ENCODE measurements at regions of chr3 and their contacts with region 1.

Region 1: DNA sequence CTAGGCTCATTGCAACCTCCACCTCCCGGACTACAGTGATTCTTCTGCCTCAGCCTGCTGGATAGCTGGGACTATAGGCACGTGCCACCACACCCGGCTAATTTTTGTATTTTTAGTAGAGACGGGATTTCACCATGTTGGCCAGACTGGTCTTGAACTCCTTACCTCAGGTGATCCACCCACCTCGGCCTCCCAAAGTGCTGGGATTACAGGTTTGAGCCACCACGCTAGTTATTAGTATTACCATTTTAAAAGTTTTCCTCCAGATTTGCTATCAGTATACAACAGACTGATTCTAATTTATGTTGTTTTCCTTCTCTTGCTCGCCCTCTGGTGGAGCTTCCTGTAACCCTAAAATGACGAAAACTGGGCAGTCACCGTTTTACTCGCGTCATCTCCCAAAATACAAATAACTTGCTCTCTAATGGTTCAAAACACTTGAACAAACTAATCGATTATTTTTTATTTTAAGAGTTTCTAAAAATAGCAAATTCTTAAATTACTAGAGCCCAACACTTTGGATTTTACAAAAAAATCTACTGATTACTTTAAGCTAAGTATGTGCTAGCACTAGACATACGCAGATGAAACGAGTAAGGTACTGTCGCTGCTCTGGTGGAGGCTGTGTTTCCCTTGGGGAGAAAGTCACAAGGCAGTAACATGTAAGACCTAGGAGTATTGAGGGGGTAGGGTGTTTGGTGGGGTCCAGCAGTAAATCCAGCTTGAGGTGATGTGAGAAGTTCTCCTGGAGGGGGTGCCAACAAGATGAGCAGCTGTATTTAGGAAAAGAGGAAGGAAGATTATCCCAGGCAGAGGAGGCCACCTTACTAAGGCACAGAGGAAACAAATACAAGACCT is 203.3 kb downstream of the MBNL1 start:
- DNase-seq: peak; percentile 70
- H3K4me3 ChIP-seq: no peak overlapping the region
- H3K27ac ChIP-seq: no peak overlapping the region
- H3K4me1 ChIP-seq: no peaks in the 10 kb centered on the region
- CTCF ChIP-seq: peak; percentile 90

Region 2: DNA sequence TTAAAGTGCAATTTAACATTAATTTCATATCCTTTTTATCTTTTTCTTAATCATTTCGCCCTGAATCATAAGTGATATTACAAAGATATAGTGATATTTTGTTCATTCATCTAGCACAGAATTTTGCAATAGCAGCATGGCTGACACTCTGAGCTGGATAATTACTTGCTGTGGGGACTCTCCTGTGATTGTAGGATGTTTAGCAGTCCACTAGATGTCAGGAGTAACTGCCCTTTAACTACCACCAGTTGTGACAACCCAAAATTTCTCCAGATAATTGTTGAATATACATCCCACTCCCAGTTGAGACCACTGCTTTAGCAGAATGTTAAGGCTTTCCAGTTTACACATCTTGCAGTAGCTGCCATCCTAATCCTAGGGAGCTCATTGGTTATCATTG is 400.1 kb before region 1 on chr3:
- CTCF ChIA-PET with region 1: no interaction called
- POLR2A ChIA-PET with region 1: no interaction called
- intact Hi-C with region 1: loop called (anchors 2 kb)
- DNase-seq: peak; percentile 38
- H3K4me3 ChIP-seq: no peak overlapping the region
- H3K27ac ChIP-seq: no peak overlapping the region
- H3K4me1 ChIP-seq: no peaks in the 10 kb centered on the region
- CTCF ChIP-seq: peak; percentile 80

Region 3: DNA sequence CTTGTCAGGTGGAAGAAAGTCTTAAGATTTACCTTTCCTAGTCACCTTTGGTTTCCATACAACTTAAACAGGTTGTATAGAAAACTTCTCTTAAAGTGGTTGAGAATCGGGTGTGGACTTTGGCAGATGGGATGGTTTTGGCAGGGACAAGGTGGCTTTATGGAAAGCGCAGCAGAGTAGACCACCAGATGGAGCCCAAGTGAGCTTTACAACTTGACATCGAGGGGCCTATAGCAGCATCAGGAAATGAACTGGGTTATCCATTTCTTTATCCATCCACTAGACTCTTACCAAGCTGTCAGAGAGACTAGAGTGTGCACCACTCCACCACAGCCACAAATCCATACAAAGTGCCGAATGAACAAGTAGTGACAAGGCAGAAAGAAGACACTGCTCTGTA is 288.6 kb before region 1 on chr3:
- CTCF ChIA-PET with region 1: no interaction called
- POLR2A ChIA-PET with region 1: interaction called, 3 read pairs
- intact Hi-C with region 1: loop called (anchors 2 kb)
- DNase-seq: peak; percentile 79
- H3K4me3 ChIP-seq: no peak overlapping the region
- H3K27ac ChIP-seq: no peak overlapping the region
- H3K4me1 ChIP-seq: peaks cover 3% of the 10 kb centered on the region
- CTCF ChIP-seq: peak; percentile 98

Region 4: DNA sequence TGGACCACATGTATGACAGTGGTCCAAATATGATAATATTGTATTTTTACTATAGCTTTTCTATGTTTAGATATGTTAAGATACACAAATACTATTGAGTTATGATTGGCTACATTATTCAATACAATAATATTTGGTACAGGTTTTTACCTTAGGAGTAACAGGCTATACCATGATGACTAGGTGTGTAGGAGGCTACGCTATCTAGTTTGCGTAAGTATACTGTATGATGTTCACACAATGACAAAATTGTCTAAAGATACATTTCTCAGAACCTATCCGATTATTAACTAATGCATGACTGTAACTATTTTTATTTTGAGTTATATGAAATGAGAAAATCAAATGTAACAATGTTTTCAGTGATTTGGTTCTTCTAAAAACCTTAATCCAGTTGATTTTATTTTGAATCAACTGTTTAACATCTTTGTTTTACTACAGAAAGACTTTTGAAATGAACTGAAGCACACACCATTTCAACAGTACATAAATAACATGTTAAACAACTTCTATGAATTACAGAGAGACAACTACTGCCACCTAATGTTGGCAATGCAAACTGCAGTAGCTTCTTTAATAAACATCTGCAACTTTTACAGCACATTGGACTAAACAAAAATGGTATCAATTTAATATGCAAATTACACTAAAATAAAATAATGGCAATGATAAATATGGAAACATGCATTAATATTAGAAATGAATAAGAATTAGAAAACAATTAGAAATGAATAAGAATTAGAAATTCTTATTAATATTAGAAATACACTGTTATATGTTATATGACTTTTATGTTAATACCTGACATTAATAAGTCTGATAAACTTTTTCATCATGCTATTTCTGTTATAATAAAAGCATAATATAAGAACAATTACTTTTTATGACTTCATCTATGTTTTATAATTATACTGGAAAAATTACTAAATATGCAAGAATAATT is 52.4 kb after region 1 on chr3:
- CTCF ChIA-PET with region 1: no interaction called
- POLR2A ChIA-PET with region 1: interaction called, 3 read pairs
- intact Hi-C with region 1: loop called (anchors 2 kb)
- DNase-seq: peak; percentile 56
- H3K4me3 ChIP-seq: no peak overlapping the region
- H3K27ac ChIP-seq: no peak overlapping the region
- H3K4me1 ChIP-seq: no peaks in the 10 kb centered on the region
- CTCF ChIP-seq: peak; percentile 98

Measured in OCI-LY7 (cell line).